Sciatic nerve (tissue), 2 donors: ENCODE measurements at regions of chr12 and their contacts with region 1.

Region 1: DNA sequence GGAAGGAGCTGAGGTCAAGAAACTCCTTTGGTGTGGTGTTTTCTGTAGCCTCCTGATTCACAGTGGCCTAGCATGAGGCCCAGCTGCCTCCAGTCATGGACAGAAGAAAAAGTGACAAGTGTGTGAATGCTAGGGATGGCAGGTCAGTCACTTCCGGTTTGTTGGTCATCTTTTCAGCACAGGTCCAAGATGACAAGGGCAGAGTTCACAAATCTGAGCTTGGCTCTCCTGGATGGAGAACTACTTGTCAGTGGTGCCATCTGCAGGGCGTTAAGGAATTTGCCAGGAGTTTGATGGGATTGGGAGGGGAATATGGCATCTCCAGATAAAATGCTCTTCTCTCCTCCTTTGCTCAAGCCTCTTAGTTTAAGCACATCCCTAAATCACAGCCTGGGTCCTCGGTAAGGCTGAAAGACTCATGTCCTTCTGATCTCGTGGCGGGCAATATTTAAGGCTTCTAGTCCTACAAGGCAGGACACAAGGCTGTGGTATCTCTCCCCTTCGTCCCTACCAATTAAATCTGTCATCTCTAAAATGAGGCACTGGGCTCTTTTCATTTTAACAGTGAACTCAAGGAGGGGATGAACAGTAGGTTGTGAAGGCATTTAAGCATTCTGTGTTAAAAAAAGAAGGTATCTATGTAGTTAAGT is 10.0 kb downstream of the TUBA1B start:
- DNase-seq: peak; percentile 67
- ATAC-seq: peak; percentile 85

Region 2: GRCh38 chr12:49069507-49070346 is 51.4 kb before region 1 on chr12 and contains the start of gene RHEBL1:
- intact Hi-C with region 1: loop called (anchors 10 kb)
- DNase-seq: peak; percentile 98
- ATAC-seq: peak; percentile 100
- total RNA-seq, gene RHEBL1: 2.7 TPM